ENCODE measurements at regions of chr4 and their contacts with region 1.

Region 1: GRCh38 chr4:48109413-48110263 is 24.4 kb downstream of the TXK start:
- DNase-seq: no peak
- ATAC-seq: peak; percentile 86
- H3K4me3 Mint-ChIP-seq: no peak overlapping the region
- H3K27ac Mint-ChIP-seq: peak overlapping the region; percentile 65
- H3K4me1 Mint-ChIP-seq: peaks cover 61% of the 10 kb centered on the region
- H3K27me3 Mint-ChIP-seq: no peaks in the 10 kb centered on the region

Region 2: GRCh38 chr4:48016141-48017103 is 93.2 kb before region 1 on chr4 and contains the starts of genes CNGA1 and NIPAL1:
- CTCF ChIA-PET with region 1: interaction called, 11 read pairs
- POLR2A ChIA-PET with region 1: no interaction called
- intact Hi-C with region 1: no loop called
- DNase-seq: peak; percentile 80
- ATAC-seq: peak; percentile 86
- H3K4me3 Mint-ChIP-seq: peak within 1 kb of the TSS; percentile 76
- H3K27ac Mint-ChIP-seq: peak within 1 kb of the TSS; percentile 66
- H3K4me1 Mint-ChIP-seq: peaks cover 29% of the 10 kb centered on the region
- H3K27me3 Mint-ChIP-seq: peaks cover 16% of the 10 kb centered on the region
- total RNA-seq, gene CNGA1: 0.16 to 0.30 TPM
- total RNA-seq, gene NIPAL1: 1.6 to 1.8 TPM